ENCODE measurements at regions of chr1 and their contacts with region 1.

Region 1: GRCh38 chr1:89022167-89022959 is at the start of gene GBP3:
- ATAC-seq: peak in 5 of 8 experiments; percentile 32 to 86 (median 76)
- H3K4me3 ChIP-seq: no peak within 1 kb of the TSS
- H3K27ac ChIP-seq: no peak within 1 kb of the TSS
- H3K4me1 ChIP-seq: peaks cover 0 to 9% of the 10 kb centered on the region in 2 donors
- total RNA-seq, gene GBP3: 0.09 to 44.5 (median 1.8) TPM

Region 2: GRCh38 chr1:89454845-89455521 is 432.6 kb after region 1 on chr1:
- in situ Hi-C with region 1: loop called in 2 of 9 experiments (anchors 25 kb)
- ATAC-seq: peak; percentile 56 to 90 (median 81)
- H3K4me3 ChIP-seq: no peak overlapping the region
- H3K27ac ChIP-seq: no peak overlapping the region
- H3K4me1 ChIP-seq: peaks cover 0 to 3% of the 10 kb centered on the region in 2 donors